ENCODE measurements at regions of chr20 and their contacts with region 1.

Region 1: GRCh38 chr20:59903621-59904020 is 29.8 kb downstream of the SYCP2 start:
- DNase-seq: no peak
- H3K4me3 ChIP-seq: no peak overlapping the region
- H3K27ac ChIP-seq: no peak overlapping the region
- H3K4me1 ChIP-seq: no peaks in the 10 kb centered on the region
- H3K27me3 ChIP-seq: no peaks in the 10 kb centered on the region
- CTCF ChIP-seq: no peak
- POLR2A ChIP-seq: no peak

Region 2: GRCh38 chr20:59831916-59832270 is 71.7 kb before region 1 on chr20:
- intact Hi-C with region 1: loop called (anchors 2 kb)
- DNase-seq: no peak
- H3K4me3 ChIP-seq: no peak overlapping the region
- H3K27ac ChIP-seq: no peak overlapping the region
- H3K4me1 ChIP-seq: peaks cover 0 to 14% of the 10 kb centered on the region in 2 donors
- H3K27me3 ChIP-seq: peaks cover 0 to 11% of the 10 kb centered on the region in 2 donors
- CTCF ChIP-seq: no peak
- POLR2A ChIP-seq: no peak

Measured in breast epithelium (tissue), 4 donors.